Naive thymus-derived CD4-positive, alpha-beta T cell (primary cell): ENCODE measurements at regions of chr10 and their contacts with region 1.

Region 1: GRCh38 chr10:70146489-70147258 is at the start of gene TYSND1:
- DNase-seq: peak; percentile 79 to 95 (median 92)
- ATAC-seq: peak; percentile 92
- H3K4me3 ChIP-seq: peak within 1 kb of the TSS; percentile 79
- H3K4me3 Mint-ChIP-seq: peak within 1 kb of the TSS; percentile 89 to 96 (median 93)
- H3K27ac ChIP-seq: peak within 1 kb of the TSS; percentile 80
- H3K27ac Mint-ChIP-seq: peak within 1 kb of the TSS; percentile 87 to 98 (median 95)
- H3K4me1 ChIP-seq: peaks cover 13 to 22% of the 10 kb centered on the region in 2 donors
- H3K4me1 Mint-ChIP-seq: peaks cover 15 to 45% (median 36%) of the 10 kb centered on the region in 7 donors
- H3K27me3 ChIP-seq: no peaks in the 10 kb centered on the region
- H3K27me3 Mint-ChIP-seq: no peaks in the 10 kb centered on the region
- total RNA-seq, gene TYSND1: 13.8 to 35.9 (median 19.5) TPM

Region 2: DNA sequence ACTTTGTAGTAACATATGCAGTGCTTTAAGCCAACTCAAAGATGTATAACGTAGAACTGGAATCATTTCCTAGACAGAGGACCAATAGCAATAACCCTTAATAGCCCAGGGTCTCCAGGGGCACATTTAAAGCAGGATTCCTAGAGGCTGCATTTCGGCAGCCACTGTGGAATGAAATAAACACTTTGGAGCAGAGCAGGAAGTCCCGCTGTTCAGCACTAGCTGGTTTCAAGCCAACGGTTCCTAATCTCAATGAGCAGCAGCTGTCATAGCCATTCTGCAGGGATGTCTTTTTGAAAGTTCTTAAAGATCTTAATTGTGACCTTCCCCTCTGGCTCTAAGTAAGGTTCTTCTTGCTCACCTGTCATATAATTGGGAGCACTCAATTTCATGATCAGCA is 112.4 kb before region 1 on chr10:
- CTCF ChIA-PET with region 1: no interaction called
- POLR2A ChIA-PET with region 1: no interaction called
- intact Hi-C with region 1: no loop called
- DNase-seq: no peak
- ATAC-seq: no peak
- H3K4me3 ChIP-seq: no peak overlapping the region
- H3K4me3 Mint-ChIP-seq: no peak overlapping the region
- H3K27ac ChIP-seq: no peak overlapping the region
- H3K27ac Mint-ChIP-seq: no peak overlapping the region
- H3K4me1 ChIP-seq: no peaks in the 10 kb centered on the region
- H3K4me1 Mint-ChIP-seq: no peaks in the 10 kb centered on the region
- H3K27me3 ChIP-seq: no peaks in the 10 kb centered on the region
- H3K27me3 Mint-ChIP-seq: peaks cover 9 to 31% (median 18%) of the 10 kb centered on the region in 5 donors

Region 3: DNA sequence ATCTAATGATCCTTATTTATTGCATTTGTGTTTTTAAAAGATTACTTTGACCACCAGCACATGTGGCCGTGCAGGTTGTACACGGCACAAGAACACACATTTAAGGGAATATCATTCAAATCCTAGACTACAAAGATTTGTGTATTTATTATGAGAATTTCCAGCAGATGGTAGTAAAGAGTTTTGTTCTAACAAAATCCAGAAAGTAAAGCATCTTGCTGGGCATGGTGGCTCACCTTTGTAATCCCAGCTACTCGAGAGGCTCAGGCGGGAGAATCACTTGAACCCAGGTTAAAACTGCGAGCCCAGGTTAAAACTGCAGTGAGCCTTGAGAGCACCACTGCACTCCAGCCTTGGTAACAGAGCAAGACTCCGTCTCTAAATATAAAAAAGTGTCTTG is 62.5 kb before region 1 on chr10:
- CTCF ChIA-PET with region 1: interaction called, 22 read pairs
- POLR2A ChIA-PET with region 1: no interaction called
- intact Hi-C with region 1: loop called in 1 of 2 experiments (anchors 1 kb)
- DNase-seq: peak in 5 of 9 donors; percentile 5 to 18 (median 9)
- ATAC-seq: no peak
- H3K4me3 ChIP-seq: no peak overlapping the region
- H3K4me3 Mint-ChIP-seq: no peak overlapping the region
- H3K27ac ChIP-seq: no peak overlapping the region
- H3K27ac Mint-ChIP-seq: no peak overlapping the region
- H3K4me1 ChIP-seq: no peaks in the 10 kb centered on the region
- H3K4me1 Mint-ChIP-seq: peaks cover 0 to under 1% (median 0%) of the 10 kb centered on the region in 7 donors
- H3K27me3 ChIP-seq: no peaks in the 10 kb centered on the region
- H3K27me3 Mint-ChIP-seq: peaks cover 0 to 12% (median 0%) of the 10 kb centered on the region in 5 donors

Region 4: GRCh38 chr10:70132098-70133029 is 14.3 kb before region 1 on chr10 and contains the start of gene AIFM2:
- CTCF ChIA-PET with region 1: interaction called, 6 read pairs
- POLR2A ChIA-PET with region 1: interaction called, 3 read pairs
- intact Hi-C with region 1: loop called (anchors 1 kb)
- DNase-seq: peak in 6 of 9 donors; percentile 23 to 51 (median 28)
- ATAC-seq: peak; percentile 74
- H3K4me3 ChIP-seq: peak within 1 kb of the TSS; percentile 50
- H3K4me3 Mint-ChIP-seq: peak within 1 kb of the TSS; percentile 78 to 94 (median 85)
- H3K27ac ChIP-seq: peak within 1 kb of the TSS; percentile 57
- H3K27ac Mint-ChIP-seq: peak within 1 kb of the TSS; percentile 34 to 89 (median 77)
- H3K4me1 ChIP-seq: peaks cover 6 to 7% of the 10 kb centered on the region in 2 donors
- H3K4me1 Mint-ChIP-seq: peaks cover 7 to 33% (median 20%) of the 10 kb centered on the region in 7 donors
- H3K27me3 ChIP-seq: no peaks in the 10 kb centered on the region
- H3K27me3 Mint-ChIP-seq: peaks cover 0 to 8% (median 0%) of the 10 kb centered on the region in 5 donors
- total RNA-seq, gene AIFM2: 3.0 to 5.5 (median 3.2) TPM

Region 5: GRCh38 chr10:70197235-70197945 is 50.7 kb after region 1 on chr10:
- CTCF ChIA-PET with region 1: interaction called, 13 read pairs
- POLR2A ChIA-PET with region 1: interaction called, 5 read pairs
- intact Hi-C with region 1: loop called (anchors 1 to 5 kb)
- DNase-seq: no peak
- ATAC-seq: peak; percentile 42
- H3K4me3 ChIP-seq: no peak overlapping the region
- H3K4me3 Mint-ChIP-seq: no peak overlapping the region
- H3K27ac ChIP-seq: no peak overlapping the region
- H3K27ac Mint-ChIP-seq: peak overlapping the region in 4 of 9 donors; percentile 18 to 36 (median 32)
- H3K4me1 ChIP-seq: peaks cover 0 to 11% of the 10 kb centered on the region in 2 donors
- H3K4me1 Mint-ChIP-seq: peaks cover 0 to 27% (median 10%) of the 10 kb centered on the region in 7 donors
- H3K27me3 ChIP-seq: no peaks in the 10 kb centered on the region
- H3K27me3 Mint-ChIP-seq: no peaks in the 10 kb centered on the region

Region 6: DNA sequence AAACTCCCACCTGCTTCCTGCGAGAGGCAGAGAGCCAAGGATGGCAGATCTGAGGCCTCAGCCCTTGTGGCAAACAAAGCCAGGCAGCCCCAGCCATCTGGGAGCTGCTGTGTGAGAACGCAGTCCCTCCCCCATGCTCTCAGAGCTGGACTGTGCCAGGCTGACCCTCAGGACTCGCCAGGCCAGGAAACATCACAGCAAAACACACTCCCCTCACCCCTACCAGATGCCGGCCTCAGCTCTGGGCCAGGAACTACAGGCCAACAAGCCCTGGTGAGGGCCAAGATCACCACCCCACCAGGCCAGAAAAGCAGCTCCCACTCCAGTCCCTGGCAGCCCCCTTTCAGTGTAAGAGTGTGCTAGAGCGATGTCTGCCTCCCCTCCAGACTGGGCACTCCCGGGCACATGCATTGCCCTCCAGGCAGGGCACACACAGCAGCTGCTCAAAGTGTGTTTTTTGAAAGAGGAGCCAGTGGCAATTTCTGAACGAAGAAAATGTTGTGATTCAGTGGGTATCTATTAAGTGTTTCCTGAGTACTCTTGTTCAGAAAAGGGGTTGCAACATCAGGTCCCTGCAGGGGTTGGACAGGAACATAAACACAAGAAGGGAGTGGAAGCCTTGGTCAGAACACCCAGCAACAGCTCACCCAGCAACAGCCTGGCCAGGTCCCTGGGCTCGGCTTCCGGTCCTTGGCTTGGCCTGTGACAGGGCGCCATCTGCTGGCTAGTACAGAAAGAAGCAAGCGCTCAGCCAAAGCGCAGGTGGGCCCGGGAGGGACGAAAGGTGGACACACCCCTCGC is 217.5 kb after region 1 on chr10:
- CTCF ChIA-PET with region 1: interaction called, 10 read pairs
- POLR2A ChIA-PET with region 1: interaction called, 7 read pairs
- intact Hi-C with region 1: loop called (anchors 1 kb)
- DNase-seq: peak; percentile 62 to 83 (median 77)
- ATAC-seq: peak; percentile 98
- H3K4me3 ChIP-seq: no peak overlapping the region
- H3K4me3 Mint-ChIP-seq: peak overlapping the region in 5 of 10 donors; percentile 23 to 71 (median 42)
- H3K27ac ChIP-seq: no peak overlapping the region
- H3K27ac Mint-ChIP-seq: peak overlapping the region in 4 of 9 donors; percentile 25 to 50 (median 36)
- H3K4me1 ChIP-seq: peaks cover 0 to 6% of the 10 kb centered on the region in 2 donors
- H3K4me1 Mint-ChIP-seq: peaks cover 7 to 12% (median 9%) of the 10 kb centered on the region in 7 donors
- H3K27me3 ChIP-seq: no peaks in the 10 kb centered on the region
- H3K27me3 Mint-ChIP-seq: peaks cover 0 to 3% (median 0%) of the 10 kb centered on the region in 5 donors